ENCODE measurements at regions of chr1 and their contacts with region 1.

Region 1: DNA sequence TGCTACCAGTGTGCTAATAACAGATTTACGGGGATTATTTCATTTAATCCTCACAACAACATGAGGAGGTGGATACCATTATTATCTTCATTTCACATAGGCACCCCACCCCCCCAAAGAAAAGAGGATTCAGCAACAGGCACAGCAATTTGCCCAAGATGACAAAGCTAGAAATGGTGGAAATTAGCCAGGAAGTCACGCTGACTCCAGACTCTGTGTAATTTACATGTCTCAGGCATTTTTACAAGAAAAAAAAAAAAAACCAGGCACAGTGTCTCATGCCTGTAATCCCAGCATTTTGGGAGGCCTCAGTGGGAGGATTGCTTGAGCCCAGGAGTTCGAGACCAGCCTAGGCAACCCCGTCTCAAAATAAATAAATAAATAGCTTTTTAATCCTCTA is 37.5 kb upstream of the PRDM2 start:
- DNase-seq: no peak
- ATAC-seq: no peak
- H3K4me3 Mint-ChIP-seq: no peak overlapping the region
- H3K27ac Mint-ChIP-seq: no peak overlapping the region
- H3K4me1 Mint-ChIP-seq: peaks cover 34% of the 10 kb centered on the region
- H3K27me3 Mint-ChIP-seq: no peaks in the 10 kb centered on the region
- CTCF ChIP-seq: no peak

Region 2: DNA sequence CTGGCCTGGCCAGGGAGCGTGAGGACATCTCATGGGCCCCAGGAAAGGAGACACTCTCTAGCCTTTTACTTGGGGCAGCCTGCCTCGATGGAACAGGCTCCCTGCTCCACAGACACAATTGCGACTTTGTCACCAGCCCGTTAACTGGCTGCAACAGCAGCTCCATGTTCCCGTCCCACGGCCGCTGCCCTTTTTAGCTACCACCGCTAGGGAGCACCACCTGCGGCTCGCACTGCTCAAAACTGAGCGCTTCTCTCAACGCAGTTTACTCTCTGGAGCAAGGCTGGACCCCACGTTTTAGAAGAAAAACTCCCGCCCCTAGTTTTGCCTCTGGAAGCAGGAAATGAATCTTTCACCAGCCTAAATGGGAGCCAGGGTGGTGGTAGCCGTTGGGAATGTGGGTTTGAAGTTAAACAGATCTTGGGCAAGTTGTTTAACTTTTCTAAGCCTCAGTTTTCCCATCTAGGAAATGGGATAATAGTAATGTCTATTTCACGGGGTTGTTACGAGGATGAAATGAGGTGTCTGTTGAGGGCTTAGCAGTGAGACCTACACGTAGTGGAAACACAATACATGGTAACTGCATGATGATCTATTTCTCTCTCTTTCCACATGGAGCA is 145.2 kb before region 1 on chr1:
- CTCF ChIA-PET with region 1: no interaction called
- POLR2A ChIA-PET with region 1: no interaction called
- intact Hi-C with region 1: loop called (anchors 10 kb)
- DNase-seq: no peak
- ATAC-seq: no peak
- H3K4me3 Mint-ChIP-seq: no peak overlapping the region
- H3K27ac Mint-ChIP-seq: no peak overlapping the region
- H3K4me1 Mint-ChIP-seq: peaks cover 2% of the 10 kb centered on the region
- H3K27me3 Mint-ChIP-seq: peaks cover 41% of the 10 kb centered on the region
- CTCF ChIP-seq: no peak

Region 3: DNA sequence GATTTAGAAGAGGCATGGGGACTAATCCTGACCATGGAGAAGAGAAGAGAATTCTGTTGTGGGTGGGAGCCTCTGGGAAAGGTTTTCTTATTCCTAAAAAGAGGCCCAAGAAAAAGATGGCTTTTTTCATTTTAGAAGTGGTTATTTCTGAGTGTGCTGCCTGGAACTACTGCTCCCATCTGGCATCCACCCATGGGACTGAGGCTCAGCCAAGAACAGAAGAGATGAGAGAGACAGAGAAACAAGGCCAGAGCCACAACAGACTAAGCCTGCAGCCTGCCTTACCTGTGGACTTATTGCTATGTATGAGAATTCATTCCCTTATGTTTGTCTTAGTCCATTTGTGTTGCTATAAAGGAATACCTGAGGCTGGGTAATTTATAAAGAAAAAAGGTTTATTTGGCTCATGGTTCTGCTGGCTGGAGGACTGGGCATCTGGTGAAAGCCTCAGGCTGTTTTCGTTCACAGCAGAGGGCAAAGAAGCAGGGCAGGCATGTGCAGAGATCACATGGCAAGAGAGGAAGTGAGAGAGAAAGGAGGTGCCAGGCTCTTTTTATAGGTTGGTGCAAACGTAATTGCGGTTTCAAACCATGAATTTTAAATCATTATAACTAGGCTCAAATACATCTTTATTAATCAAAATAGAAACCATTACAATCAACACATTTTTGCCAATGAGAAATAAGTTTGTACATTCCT is 20.0 kb before region 1 on chr1:
- CTCF ChIA-PET with region 1: no interaction called
- POLR2A ChIA-PET with region 1: interaction called, 5 read pairs
- intact Hi-C with region 1: loop called (anchors 2 kb)
- DNase-seq: no peak
- ATAC-seq: peak; percentile 86
- H3K4me3 Mint-ChIP-seq: peak overlapping the region; percentile 62
- H3K27ac Mint-ChIP-seq: peak overlapping the region; percentile 85
- H3K4me1 Mint-ChIP-seq: peaks cover 46% of the 10 kb centered on the region
- H3K27me3 Mint-ChIP-seq: no peaks in the 10 kb centered on the region
- CTCF ChIP-seq: no peak

Region 4: GRCh38 chr1:13725714-13726175 is 63.3 kb after region 1 on chr1:
- CTCF ChIA-PET with region 1: interaction called, 107 read pairs
- POLR2A ChIA-PET with region 1: interaction called, 57 read pairs
- intact Hi-C with region 1: loop called (anchors 1 kb)
- DNase-seq: no peak
- ATAC-seq: peak; percentile 36
- H3K4me3 Mint-ChIP-seq: peak overlapping the region; percentile 50
- H3K27ac Mint-ChIP-seq: peak overlapping the region; percentile 97
- H3K4me1 Mint-ChIP-seq: peaks cover 88% of the 10 kb centered on the region
- H3K27me3 Mint-ChIP-seq: no peaks in the 10 kb centered on the region
- CTCF ChIP-seq: no peak

Region 5: GRCh38 chr1:13764588-13765332 is 102.3 kb after region 1 on chr1:
- CTCF ChIA-PET with region 1: interaction called, 4 read pairs
- POLR2A ChIA-PET with region 1: interaction called, 5 read pairs
- intact Hi-C with region 1: loop called (anchors 1 kb)
- DNase-seq: no peak
- ATAC-seq: peak; percentile 42
- H3K4me3 Mint-ChIP-seq: no peak overlapping the region
- H3K27ac Mint-ChIP-seq: peak overlapping the region; percentile 53
- H3K4me1 Mint-ChIP-seq: peaks cover 88% of the 10 kb centered on the region
- H3K27me3 Mint-ChIP-seq: no peaks in the 10 kb centered on the region
- CTCF ChIP-seq: no peak

Region 6: GRCh38 chr1:13807213-13807612 is 144.7 kb after region 1 on chr1:
- CTCF ChIA-PET with region 1: interaction called, 3 read pairs
- POLR2A ChIA-PET with region 1: interaction called, 5 read pairs
- intact Hi-C with region 1: loop called (anchors 1 kb)
- DNase-seq: no peak
- ATAC-seq: peak; percentile 43
- H3K4me3 Mint-ChIP-seq: no peak overlapping the region
- H3K27ac Mint-ChIP-seq: no peak overlapping the region
- H3K4me1 Mint-ChIP-seq: peaks cover 57% of the 10 kb centered on the region
- H3K27me3 Mint-ChIP-seq: no peaks in the 10 kb centered on the region
- CTCF ChIP-seq: no peak

Region 7: DNA sequence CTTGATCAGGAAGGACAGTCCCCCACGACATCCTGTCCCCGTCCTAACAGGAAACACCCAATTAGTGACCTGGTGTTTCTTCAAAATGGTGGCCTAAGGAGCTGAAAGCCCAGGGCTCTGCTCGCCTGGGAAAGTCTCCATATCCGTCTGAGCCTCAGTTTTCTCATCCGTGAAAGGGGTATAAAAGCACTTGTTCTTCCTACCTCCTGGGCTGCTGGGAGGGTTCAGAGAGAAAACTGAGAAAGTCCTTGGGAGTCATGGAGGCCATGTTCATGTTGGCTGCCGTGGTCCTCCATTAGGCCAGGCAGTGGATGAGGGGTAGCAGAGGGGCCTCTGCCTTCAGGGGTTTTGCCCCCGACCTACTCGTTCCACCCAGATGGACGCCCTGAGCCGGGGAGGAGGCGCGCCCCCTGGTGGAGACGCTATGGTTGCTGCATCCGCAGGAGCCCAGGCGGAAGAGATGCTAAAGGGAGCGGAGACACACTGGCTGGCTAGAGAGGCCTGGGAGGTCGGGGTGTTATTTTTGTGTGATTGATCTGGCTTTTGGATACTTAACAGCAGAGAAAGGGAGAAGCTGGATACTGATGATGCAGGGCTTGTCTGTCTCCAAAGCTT is 151.0 kb after region 1 on chr1:
- CTCF ChIA-PET with region 1: interaction called, 7 read pairs
- POLR2A ChIA-PET with region 1: interaction called, 5 read pairs
- intact Hi-C with region 1: loop called (anchors 1 kb)
- DNase-seq: peak; percentile 41
- ATAC-seq: peak; percentile 56
- H3K4me3 Mint-ChIP-seq: no peak overlapping the region
- H3K27ac Mint-ChIP-seq: no peak overlapping the region
- H3K4me1 Mint-ChIP-seq: peaks cover 31% of the 10 kb centered on the region
- H3K27me3 Mint-ChIP-seq: no peaks in the 10 kb centered on the region
- CTCF ChIP-seq: no peak

Region 8: DNA sequence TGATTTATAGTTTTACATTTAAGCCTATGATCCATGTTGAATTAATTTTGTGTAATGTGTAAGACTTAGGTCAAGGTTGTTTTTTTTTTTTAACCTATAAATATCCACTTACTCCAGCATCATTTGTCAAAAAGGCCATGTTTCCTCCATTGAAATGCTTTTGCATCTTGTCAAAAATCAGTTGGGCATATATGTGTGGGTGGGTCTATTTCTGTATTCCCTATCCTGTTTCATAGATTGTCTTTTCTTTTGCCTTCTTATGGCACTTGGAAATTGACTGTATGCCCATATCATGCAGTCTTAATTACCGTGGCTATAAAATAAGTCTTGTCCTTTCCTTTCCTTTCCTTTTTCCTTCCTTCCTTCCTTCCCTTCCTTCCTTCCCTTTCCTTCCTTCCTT is 175.7 kb after region 1 on chr1:
- CTCF ChIA-PET with region 1: no interaction called
- POLR2A ChIA-PET with region 1: no interaction called
- intact Hi-C with region 1: no loop called
- DNase-seq: no peak
- ATAC-seq: no peak
- H3K4me3 Mint-ChIP-seq: no peak overlapping the region
- H3K27ac Mint-ChIP-seq: no peak overlapping the region
- H3K4me1 Mint-ChIP-seq: no peaks in the 10 kb centered on the region
- H3K27me3 Mint-ChIP-seq: peaks cover 31% of the 10 kb centered on the region
- CTCF ChIP-seq: no peak